Activated T-helper 1 cell treated with anti-CD3 and anti-CD28 coated beads, Interleukin-12 subunit alpha, Interleukin-12 subunit beta, Interleukin-2, Interleukin-4 antibody, amounts not matched to agents 30 ng/mL and 10 ng/mL and 1 ng/mL, durations not matched to agents 14 hours and 24 hours and 36 hours (primary cell): ENCODE measurements at regions of chr12 and their contacts with region 1.

Region 1: DNA sequence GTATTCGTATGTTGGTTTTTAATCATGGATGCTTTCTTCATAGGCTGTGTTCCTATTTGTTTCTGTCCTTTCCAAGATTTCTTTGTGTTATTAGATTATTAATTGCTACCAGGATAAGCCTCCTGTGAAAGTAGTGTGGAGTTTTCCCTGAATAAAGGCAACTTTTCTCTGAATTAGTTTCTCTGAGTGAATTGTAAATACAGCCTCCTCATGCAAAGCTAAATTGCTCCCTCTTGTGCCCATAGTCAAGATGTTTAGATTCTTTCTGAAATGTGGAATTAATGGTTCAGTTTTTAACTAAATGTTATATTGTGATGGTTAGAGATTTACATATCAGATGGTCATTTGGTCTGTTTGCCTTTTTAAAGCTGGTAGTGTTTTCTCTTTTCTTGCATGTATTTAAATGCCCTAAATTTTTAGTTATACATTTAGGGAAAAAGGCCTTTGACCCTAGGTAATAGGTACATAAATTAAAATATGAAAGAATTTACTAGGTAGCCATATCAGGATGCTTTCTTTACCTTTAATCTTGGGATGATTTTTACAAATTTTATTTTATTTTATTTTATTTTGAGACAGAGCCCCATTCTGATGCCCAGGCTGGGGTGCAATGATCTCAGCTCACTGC is 8.9 kb downstream of the APAF1 start:
- DNase-seq: no peak
- H3K4me3 Mint-ChIP-seq: no peak overlapping the region
- H3K27ac Mint-ChIP-seq: no peak overlapping the region
- H3K4me1 Mint-ChIP-seq: peaks cover 18% of the 10 kb centered on the region
- H3K27me3 Mint-ChIP-seq: no peaks in the 10 kb centered on the region

Region 2: GRCh38 chr12:97568458-97569180 is 1085.4 kb before region 1 on chr12:
- intact Hi-C with region 1: no loop called
- DNase-seq: no peak
- H3K4me3 Mint-ChIP-seq: no peak overlapping the region
- H3K27ac Mint-ChIP-seq: no peak overlapping the region
- H3K4me1 Mint-ChIP-seq: no peaks in the 10 kb centered on the region
- H3K27me3 Mint-ChIP-seq: no peaks in the 10 kb centered on the region

Region 3: GRCh38 chr12:98424726-98425401 is 229.1 kb before region 1 on chr12:
- intact Hi-C with region 1: loop called (anchors 2 kb)
- DNase-seq: peak; percentile 18
- H3K4me3 Mint-ChIP-seq: no peak overlapping the region
- H3K27ac Mint-ChIP-seq: no peak overlapping the region
- H3K4me1 Mint-ChIP-seq: peaks cover 6% of the 10 kb centered on the region
- H3K27me3 Mint-ChIP-seq: peaks cover 7% of the 10 kb centered on the region

Region 4: GRCh38 chr12:98544751-98545150 is 109.2 kb before region 1 on chr12:
- intact Hi-C with region 1: loop called (anchors 5 kb)
- DNase-seq: no peak
- H3K4me3 Mint-ChIP-seq: no peak overlapping the region
- H3K27ac Mint-ChIP-seq: no peak overlapping the region
- H3K4me1 Mint-ChIP-seq: peaks cover 12% of the 10 kb centered on the region
- H3K27me3 Mint-ChIP-seq: no peaks in the 10 kb centered on the region

Region 5: DNA sequence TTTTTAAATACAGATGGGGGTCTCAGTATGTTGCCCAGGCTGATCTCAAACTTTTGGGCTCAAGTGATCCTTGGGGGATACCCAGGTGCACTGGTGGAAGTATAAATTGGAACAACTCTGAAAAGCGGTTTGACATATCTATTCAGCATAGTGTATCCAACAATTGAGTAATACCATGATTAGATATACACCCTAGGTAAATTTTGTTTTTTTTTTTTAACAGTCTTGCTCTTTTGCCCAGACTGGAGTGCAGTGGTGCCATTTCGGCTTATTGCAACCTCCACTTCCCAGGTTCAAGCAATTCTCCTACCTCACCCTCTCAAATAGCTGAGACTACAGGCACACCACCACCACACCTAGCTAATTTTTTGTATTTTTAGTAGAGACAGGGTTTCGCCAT is 92.1 kb before region 1 on chr12:
- intact Hi-C with region 1: loop called (anchors 1 kb)
- DNase-seq: no peak
- H3K4me3 Mint-ChIP-seq: no peak overlapping the region
- H3K27ac Mint-ChIP-seq: no peak overlapping the region
- H3K4me1 Mint-ChIP-seq: peaks cover 4% of the 10 kb centered on the region
- H3K27me3 Mint-ChIP-seq: peaks cover 3% of the 10 kb centered on the region